B cell (primary cell): ENCODE measurements at regions of chr7 and their contacts with region 1.

Region 1: GRCh38 chr7:81469153-81469868 is 300.5 kb downstream of the HGF start:
- DNase-seq: no peak
- ATAC-seq: no peak
- H3K4me3 ChIP-seq: no peak overlapping the region
- H3K4me3 Mint-ChIP-seq: no peak overlapping the region
- H3K27ac ChIP-seq: no peak overlapping the region
- H3K27ac Mint-ChIP-seq: no peak overlapping the region
- H3K4me1 ChIP-seq: no peaks in the 10 kb centered on the region
- H3K4me1 Mint-ChIP-seq: no peaks in the 10 kb centered on the region
- H3K27me3 ChIP-seq: peaks cover 0 to 2% (median 0%) of the 10 kb centered on the region in 4 experiments
- H3K27me3 Mint-ChIP-seq: no peaks in the 10 kb centered on the region
- CTCF ChIP-seq: no peak

Region 2: DNA sequence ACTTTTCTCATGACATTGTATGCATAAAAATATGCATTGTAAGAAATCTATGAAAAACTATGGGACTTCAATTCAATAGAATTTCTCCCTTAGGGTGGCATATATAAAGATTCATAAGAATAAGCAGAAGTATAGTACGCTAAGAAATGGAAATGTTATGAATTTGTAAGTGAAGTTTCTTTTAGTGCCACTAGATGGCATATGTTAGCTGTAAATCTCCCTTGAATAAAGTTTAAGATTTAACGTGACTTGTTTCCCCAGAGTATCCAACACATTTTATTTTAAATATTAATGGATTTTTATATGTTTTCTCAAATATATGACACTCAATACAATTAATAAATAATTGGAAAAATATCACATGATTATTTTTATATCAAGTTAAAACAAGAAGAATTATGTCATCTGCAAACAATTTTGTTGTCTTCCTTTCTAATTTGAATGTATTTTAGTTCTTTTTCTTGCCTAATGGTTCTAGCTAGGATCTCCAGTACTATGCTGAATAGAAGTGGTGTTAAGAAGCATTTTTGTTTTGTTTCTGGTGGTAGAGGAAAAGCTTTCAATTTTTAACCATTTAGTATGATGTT is 13.4 kb after region 1 on chr7:
- CTCF ChIA-PET with region 1: interaction called, 10 read pairs
- POLR2A ChIA-PET with region 1: no interaction called
- intact Hi-C with region 1: no loop called
- DNase-seq: peak; percentile 10
- ATAC-seq: no peak
- H3K4me3 ChIP-seq: no peak overlapping the region
- H3K4me3 Mint-ChIP-seq: no peak overlapping the region
- H3K27ac ChIP-seq: no peak overlapping the region
- H3K27ac Mint-ChIP-seq: no peak overlapping the region
- H3K4me1 ChIP-seq: no peaks in the 10 kb centered on the region
- H3K4me1 Mint-ChIP-seq: no peaks in the 10 kb centered on the region
- H3K27me3 ChIP-seq: no peaks in the 10 kb centered on the region
- H3K27me3 Mint-ChIP-seq: no peaks in the 10 kb centered on the region
- CTCF ChIP-seq: peak; percentile 82